ENCODE measurements at regions of chr3 and their contacts with region 1.

Region 1: DNA sequence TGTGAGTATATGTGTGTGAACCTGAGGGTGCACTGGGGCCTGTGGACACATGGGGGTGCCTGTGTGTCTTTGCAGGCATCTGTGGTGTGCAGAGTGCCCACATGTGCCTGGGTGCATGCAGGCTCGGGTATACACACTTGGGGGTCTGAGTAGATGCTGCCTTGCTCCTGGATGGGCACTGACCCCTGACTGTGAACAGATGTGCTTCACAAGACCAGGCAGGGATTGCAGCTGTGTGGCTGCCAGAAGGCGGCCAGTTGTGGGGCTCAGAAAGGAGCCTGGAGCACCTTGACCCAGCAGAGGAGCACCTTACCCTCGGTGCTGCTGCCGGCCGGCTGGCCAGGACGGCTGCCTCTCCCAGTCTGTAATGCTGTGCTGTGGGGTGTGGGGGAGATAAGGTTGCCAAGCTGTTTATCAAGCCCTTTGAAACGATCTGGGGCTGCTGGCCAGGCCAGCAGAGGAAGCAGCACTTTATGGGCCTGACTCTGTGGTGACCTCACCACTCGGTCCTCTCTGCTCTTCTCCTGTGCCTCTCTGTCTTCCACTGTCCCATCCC is 55.5 kb upstream of the MRPS22 start:
- DNase-seq: peak; percentile 82

Region 2: DNA sequence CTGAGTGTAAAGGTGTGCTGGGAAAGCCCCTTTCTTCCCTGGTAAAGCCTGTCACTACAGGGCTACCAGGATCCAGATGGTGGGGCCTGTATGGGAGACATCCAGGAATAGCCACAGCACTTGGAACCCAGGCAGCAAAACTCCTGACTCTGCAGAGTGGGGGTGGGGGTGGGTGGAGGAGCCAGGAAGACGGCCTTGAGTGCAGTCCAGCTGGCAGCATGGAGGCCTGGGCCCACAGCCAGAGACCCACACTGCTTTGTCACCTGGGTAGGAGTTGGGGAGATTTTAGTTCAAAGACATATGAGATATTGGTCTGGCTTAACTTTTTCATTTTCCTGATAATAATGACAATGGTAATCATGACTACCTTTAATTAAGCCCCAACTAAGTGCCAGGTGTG is 61.2 kb before region 1 on chr3:
- intact Hi-C with region 1: loop called (anchors 5 kb)
- DNase-seq: no peak

Region 3: GRCh38 chr3:139302084-139302800 is 13.9 kb after region 1 on chr3:
- intact Hi-C with region 1: loop called (anchors 1 kb)
- DNase-seq: peak; percentile 81